ENCODE measurements at regions of chr17 and their contacts with region 1.

Region 1: DNA sequence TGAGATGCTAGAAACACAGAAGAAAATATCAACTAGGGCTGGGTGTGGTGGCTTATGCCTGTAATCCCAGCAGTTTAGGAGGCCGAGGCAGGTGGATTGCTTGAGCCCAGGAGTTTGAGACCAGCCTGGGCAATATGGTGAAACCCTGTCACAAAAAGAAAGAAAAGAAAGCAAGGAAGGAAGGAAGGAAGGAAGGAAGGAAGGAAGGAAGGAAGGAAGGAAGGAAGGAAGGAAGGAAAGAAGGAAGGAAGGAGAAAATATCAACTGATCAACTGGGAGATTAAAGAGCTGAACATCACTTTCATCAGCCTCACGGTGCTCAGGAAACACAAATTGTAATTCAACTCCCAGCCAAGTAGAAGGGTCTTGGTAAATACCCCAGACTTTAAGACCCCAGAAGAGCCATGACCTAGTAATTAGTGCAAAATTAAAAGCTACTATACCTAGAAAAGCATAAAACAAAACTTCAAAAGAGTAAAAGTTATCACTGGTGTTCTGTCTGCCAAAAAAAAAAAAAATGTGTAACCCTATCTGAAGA is 27.8 kb upstream of the SLFN13 start:
- DNase-seq: no peak
- H3K4me3 ChIP-seq: no peak overlapping the region
- H3K27me3 ChIP-seq: peaks cover 2% of the 10 kb centered on the region
- CTCF ChIP-seq: no peak

Region 2: GRCh38 chr17:35076874-35077273 is 399.5 kb before region 1 on chr17:
- CTCF ChIA-PET with region 1: no interaction called
- POLR2A ChIA-PET with region 1: interaction called, 13 read pairs
- DNase-seq: no peak
- H3K4me3 ChIP-seq: no peak overlapping the region
- H3K27me3 ChIP-seq: no peaks in the 10 kb centered on the region
- CTCF ChIP-seq: no peak

Region 3: DNA sequence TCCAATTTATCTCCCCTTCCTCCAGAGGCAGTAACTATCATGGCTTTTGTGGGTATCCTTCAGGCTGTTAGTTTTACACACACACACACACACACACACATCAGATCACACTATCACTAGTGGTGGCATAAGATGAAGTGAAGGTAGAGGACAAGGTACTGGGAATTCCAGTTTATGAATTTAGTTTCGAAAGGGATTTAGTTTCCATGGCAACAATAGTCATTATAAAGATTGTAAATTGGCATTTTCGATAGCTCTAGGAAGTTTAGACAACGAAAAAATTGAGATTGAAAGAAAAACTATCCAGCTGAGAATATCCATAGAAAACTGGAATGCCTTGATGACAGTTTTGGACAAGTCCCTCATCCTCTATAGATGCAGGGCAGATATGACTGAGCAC is 202.7 kb before region 1 on chr17:
- CTCF ChIA-PET with region 1: no interaction called
- POLR2A ChIA-PET with region 1: no interaction called
- DNase-seq: no peak
- H3K4me3 ChIP-seq: no peak overlapping the region
- H3K27me3 ChIP-seq: no peaks in the 10 kb centered on the region
- CTCF ChIP-seq: no peak

Measured in BJ (cell line).